ENCODE measurements at regions of chr1 and their contacts with region 1.

Region 1: DNA sequence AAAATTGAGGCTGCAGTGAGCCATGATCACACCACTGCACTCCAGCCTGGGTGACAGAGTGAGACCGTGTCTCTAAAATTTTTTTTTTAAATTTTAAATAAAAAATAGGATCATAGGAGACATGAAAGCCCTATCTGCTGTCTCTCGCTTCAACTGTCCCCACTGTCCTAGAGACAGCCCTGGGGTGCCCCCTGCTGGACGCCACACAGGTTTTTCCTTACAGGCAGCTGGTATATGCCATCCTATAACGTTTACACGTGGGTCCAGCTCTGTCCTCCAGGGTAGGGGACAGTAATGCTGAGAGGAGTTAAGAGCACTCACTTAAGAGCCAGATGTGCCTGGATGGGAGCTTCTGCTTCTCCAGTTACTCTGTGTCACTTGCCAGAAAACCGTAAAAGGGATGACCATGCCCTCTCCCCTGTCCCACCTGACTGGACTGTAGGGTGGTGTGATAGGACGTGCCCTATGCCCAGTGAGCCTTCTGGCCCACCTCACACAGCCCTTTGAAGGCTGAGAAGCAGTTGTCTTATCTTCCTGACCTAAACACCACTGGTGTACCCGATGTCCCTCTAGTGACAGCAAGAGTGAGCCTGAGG is 8.5 kb downstream of the FBXO2 start:
- DNase-seq: peak; percentile 70 to 81
- H3K4me3 ChIP-seq: no peak overlapping the region
- H3K4me3 Mint-ChIP-seq: no peak overlapping the region
- H3K27ac Mint-ChIP-seq: no peak overlapping the region
- H3K4me1 ChIP-seq: no peaks in the 10 kb centered on the region
- H3K4me1 Mint-ChIP-seq: no peaks in the 10 kb centered on the region
- H3K27me3 ChIP-seq: no peaks in the 10 kb centered on the region
- H3K27me3 Mint-ChIP-seq: no peaks in the 10 kb centered on the region
- CTCF ChIP-seq: peak; percentile 69 to 71

Region 2: GRCh38 chr1:10824821-10825423 is 820.8 kb before region 1 on chr1:
- CTCF ChIA-PET with region 1: no interaction called
- POLR2A ChIA-PET with region 1: no interaction called
- intact Hi-C with region 1: no loop called
- DNase-seq: no peak
- H3K4me3 ChIP-seq: no peak overlapping the region
- H3K4me3 Mint-ChIP-seq: no peak overlapping the region
- H3K27ac Mint-ChIP-seq: no peak overlapping the region
- H3K4me1 ChIP-seq: no peaks in the 10 kb centered on the region
- H3K4me1 Mint-ChIP-seq: no peaks in the 10 kb centered on the region
- H3K27me3 ChIP-seq: no peaks in the 10 kb centered on the region
- H3K27me3 Mint-ChIP-seq: no peaks in the 10 kb centered on the region
- CTCF ChIP-seq: no peak

Region 3: DNA sequence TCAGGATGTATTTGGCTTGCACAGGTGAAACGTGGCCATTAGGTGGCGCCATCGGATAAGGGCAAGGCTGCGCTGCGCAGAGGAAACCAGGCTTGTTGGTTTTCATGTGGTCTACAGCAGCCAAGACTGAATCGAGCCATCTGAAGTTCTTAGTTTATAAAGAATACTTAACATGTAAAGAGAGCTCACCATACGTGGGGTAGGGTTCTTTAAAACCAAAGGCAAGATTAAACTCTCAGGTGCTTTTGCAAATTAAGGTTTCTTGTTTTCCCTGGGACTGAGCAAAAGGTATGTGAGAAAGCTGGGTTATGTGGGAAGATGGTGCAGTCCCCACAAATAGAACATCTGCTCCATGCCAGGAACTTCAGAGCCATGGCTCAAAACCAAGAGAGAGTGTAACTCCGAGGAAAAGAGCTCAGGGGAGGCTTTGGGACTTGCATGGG is 608.0 kb before region 1 on chr1:
- CTCF ChIA-PET with region 1: interaction called, 6 read pairs
- POLR2A ChIA-PET with region 1: no interaction called
- intact Hi-C with region 1: loop called (anchors 5 kb)
- DNase-seq: peak; percentile 73 to 84
- H3K4me3 ChIP-seq: no peak overlapping the region
- H3K4me3 Mint-ChIP-seq: no peak overlapping the region
- H3K27ac Mint-ChIP-seq: no peak overlapping the region
- H3K4me1 ChIP-seq: no peaks in the 10 kb centered on the region
- H3K4me1 Mint-ChIP-seq: no peaks in the 10 kb centered on the region
- H3K27me3 ChIP-seq: no peaks in the 10 kb centered on the region
- H3K27me3 Mint-ChIP-seq: no peaks in the 10 kb centered on the region
- CTCF ChIP-seq: peak; percentile 89 to 92

Region 4: DNA sequence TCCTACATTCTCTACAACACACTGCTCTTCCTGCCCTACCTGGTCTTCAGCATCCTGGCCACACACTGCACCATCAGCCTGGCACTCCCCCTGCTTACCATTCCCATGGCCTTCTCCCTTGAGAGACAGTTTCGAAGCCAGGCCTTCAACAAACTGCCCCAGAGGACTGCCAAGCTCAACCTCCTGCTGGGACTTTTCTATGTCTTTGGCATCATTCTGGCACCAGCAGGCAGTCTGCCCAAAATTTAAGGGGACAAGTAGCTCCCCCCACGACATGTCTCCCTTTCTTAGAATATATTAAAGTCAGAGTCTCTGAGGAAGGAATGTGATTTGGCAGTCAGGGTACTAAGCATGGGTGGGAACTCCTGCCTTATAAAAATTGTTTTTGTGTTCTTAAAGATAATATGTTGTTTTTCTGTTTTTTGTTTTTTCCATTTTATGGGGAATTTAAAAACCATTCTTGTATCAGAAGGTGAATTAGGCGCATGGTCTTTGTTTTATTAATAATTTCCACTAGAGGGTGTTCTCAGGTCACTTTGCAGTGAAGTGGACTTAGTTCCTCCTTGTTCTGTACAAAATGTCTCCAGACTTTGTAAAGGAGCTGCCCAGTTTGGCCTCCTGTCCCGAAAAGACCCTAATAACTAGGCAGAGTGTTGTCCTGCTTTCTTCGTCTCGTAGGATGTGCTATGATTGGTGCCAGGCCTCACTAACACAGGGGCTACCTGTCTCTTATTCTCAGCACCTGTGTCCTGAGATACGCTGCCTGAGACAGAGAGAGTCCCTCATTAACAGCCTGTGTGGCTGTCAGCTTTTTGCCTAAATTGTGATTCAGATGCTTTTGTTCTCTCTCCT is 359.7 kb before region 1 on chr1:
- CTCF ChIA-PET with region 1: no interaction called
- POLR2A ChIA-PET with region 1: no interaction called
- intact Hi-C with region 1: loop called (anchors 1 kb)
- DNase-seq: no peak
- H3K4me3 ChIP-seq: no peak overlapping the region
- H3K4me3 Mint-ChIP-seq: no peak overlapping the region
- H3K27ac Mint-ChIP-seq: no peak overlapping the region
- H3K4me1 ChIP-seq: no peaks in the 10 kb centered on the region
- H3K4me1 Mint-ChIP-seq: peaks cover 6% of the 10 kb centered on the region
- H3K27me3 ChIP-seq: no peaks in the 10 kb centered on the region
- H3K27me3 Mint-ChIP-seq: no peaks in the 10 kb centered on the region
- CTCF ChIP-seq: peak in 1 of 2 experiments; percentile 14

Region 5: GRCh38 chr1:11364170-11364569 is 281.6 kb before region 1 on chr1:
- CTCF ChIA-PET with region 1: interaction called, 6 read pairs
- POLR2A ChIA-PET with region 1: no interaction called
- intact Hi-C with region 1: loop called (anchors 1 kb)
- DNase-seq: peak in 1 of 2 experiments; percentile 18
- H3K4me3 ChIP-seq: no peak overlapping the region
- H3K4me3 Mint-ChIP-seq: no peak overlapping the region
- H3K27ac Mint-ChIP-seq: no peak overlapping the region
- H3K4me1 ChIP-seq: peaks cover 12% of the 10 kb centered on the region
- H3K4me1 Mint-ChIP-seq: peaks cover 13% of the 10 kb centered on the region
- H3K27me3 ChIP-seq: no peaks in the 10 kb centered on the region
- H3K27me3 Mint-ChIP-seq: no peaks in the 10 kb centered on the region
- CTCF ChIP-seq: peak; percentile 35 to 41

Region 6: GRCh38 chr1:11478571-11479374 is 167.0 kb before region 1 on chr1 and contains the start of gene DISP3:
- CTCF ChIA-PET with region 1: interaction called, 4 read pairs
- POLR2A ChIA-PET with region 1: no interaction called
- intact Hi-C with region 1: loop called (anchors 5 kb)
- DNase-seq: peak; percentile 78 to 87
- H3K4me3 ChIP-seq: peak within 1 kb of the TSS; percentile 88
- H3K4me3 Mint-ChIP-seq: peak within 1 kb of the TSS; percentile 57
- H3K27ac Mint-ChIP-seq: no peak within 1 kb of the TSS
- H3K4me1 ChIP-seq: no peaks in the 10 kb centered on the region
- H3K4me1 Mint-ChIP-seq: no peaks in the 10 kb centered on the region
- H3K27me3 ChIP-seq: no peaks in the 10 kb centered on the region; the same call in 1 of the 2 replicates
- H3K27me3 Mint-ChIP-seq: peaks cover 9% of the 10 kb centered on the region
- CTCF ChIP-seq: peak; percentile 67 to 81
- total RNA-seq, gene DISP3: 0.56 and 1.1 TPM in 2 replicates

Region 7: GRCh38 chr1:11571906-11572616 is 73.7 kb before region 1 on chr1:
- CTCF ChIA-PET with region 1: no interaction called
- POLR2A ChIA-PET with region 1: no interaction called
- intact Hi-C with region 1: loop called (anchors 10 kb)
- DNase-seq: peak in 1 of 2 experiments; percentile 13
- H3K4me3 ChIP-seq: no peak overlapping the region
- H3K4me3 Mint-ChIP-seq: no peak overlapping the region
- H3K27ac Mint-ChIP-seq: no peak overlapping the region
- H3K4me1 ChIP-seq: no peaks in the 10 kb centered on the region
- H3K4me1 Mint-ChIP-seq: no peaks in the 10 kb centered on the region
- H3K27me3 ChIP-seq: peaks cover 4% of the 10 kb centered on the region
- H3K27me3 Mint-ChIP-seq: peaks cover 20% of the 10 kb centered on the region
- CTCF ChIP-seq: no peak

Region 8: DNA sequence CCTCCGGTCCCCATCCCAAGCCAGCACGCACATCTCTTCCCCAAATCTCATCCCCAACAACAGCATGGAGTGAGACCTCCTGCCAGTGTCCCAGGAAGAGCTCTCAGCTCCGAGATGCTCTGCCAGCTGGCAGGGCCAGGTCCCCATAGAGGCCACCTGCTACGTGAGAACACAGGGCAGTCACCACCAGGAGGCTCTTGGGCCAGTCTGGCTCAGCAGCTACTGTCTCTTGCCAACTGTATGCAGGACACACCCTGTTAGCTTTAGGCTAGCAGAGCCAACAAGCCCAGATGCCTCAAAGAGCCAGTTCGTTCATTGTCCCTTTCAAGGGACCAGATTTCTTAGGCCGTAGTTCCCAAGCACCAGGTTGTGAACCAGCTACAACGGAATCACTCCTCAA is 28.5 kb before region 1 on chr1:
- CTCF ChIA-PET with region 1: no interaction called
- POLR2A ChIA-PET with region 1: no interaction called
- intact Hi-C with region 1: no loop called
- DNase-seq: no peak
- H3K4me3 ChIP-seq: no peak overlapping the region
- H3K4me3 Mint-ChIP-seq: no peak overlapping the region
- H3K27ac Mint-ChIP-seq: no peak overlapping the region
- H3K4me1 ChIP-seq: no peaks in the 10 kb centered on the region
- H3K4me1 Mint-ChIP-seq: no peaks in the 10 kb centered on the region
- H3K27me3 ChIP-seq: no peaks in the 10 kb centered on the region
- H3K27me3 Mint-ChIP-seq: peaks cover 14% of the 10 kb centered on the region
- CTCF ChIP-seq: no peak

Region 9: DNA sequence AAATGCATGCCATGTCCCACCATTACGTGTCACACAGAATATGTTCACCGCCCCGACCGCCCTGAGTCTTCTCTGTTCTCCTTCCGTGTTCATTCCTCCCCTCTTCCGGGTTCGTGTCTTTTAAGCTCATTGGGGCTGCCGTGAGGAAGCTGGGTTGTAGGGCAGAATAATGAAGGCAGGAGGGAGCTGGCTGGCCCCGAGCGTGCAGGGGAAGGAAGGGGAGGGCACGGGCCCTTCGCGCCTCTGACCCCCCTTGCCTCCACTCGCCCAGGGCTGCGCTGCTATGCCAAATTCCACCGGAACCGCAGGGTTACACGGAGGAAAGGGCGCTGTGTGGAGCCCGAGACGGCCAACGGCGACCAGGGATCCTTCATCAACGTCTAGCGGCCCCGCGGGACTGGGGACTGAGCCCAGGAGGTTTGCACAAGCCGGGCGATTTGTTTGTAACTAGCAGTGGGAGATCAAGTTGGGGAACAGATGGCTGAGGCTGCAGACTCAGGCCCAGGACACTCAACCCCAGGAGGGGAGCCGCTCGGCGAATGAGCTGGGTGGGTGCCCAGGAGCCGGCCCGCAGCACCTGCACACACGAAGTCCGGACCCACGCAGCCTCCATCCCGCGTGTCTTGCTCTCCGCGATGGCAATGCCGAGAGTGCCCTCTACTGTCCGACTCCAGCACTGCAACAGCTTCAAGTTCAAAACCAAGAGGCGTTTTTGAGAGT is 73.7 kb after region 1 on chr1:
- CTCF ChIA-PET with region 1: interaction called, 4 read pairs
- POLR2A ChIA-PET with region 1: no interaction called
- intact Hi-C with region 1: loop called (anchors 5 kb)
- DNase-seq: peak; percentile 39 to 62
- H3K4me3 ChIP-seq: peak overlapping the region; percentile 34
- H3K4me3 Mint-ChIP-seq: peak overlapping the region; percentile 72
- H3K27ac Mint-ChIP-seq: no peak overlapping the region
- H3K4me1 ChIP-seq: no peaks in the 10 kb centered on the region
- H3K4me1 Mint-ChIP-seq: no peaks in the 10 kb centered on the region
- H3K27me3 ChIP-seq: no peaks in the 10 kb centered on the region
- H3K27me3 Mint-ChIP-seq: no peaks in the 10 kb centered on the region
- CTCF ChIP-seq: peak; percentile 92 to 94

Region 10: DNA sequence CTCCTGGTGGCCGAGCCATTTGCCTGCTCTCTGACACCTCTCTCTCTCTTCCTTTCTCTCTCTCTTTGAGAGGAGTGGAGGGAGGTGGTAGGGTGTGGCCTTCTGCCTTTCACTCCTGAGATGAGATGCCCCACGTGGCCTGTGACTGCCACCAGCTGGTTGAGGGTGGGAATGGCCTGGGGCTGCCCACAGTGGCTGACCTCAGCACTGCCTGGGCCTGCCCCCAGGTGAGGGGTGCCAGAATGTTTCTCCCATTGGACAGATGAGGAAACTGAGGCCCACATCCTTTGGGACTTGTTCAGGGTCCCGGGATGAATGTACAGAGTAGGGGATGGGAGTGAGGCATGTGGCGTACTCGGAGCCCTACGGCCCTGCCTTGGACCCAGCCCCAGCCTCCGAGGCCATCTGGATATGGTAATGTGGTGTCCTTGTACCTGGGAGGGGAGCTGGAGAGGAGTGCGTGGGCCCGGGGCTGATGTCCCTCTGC is 103.5 kb after region 1 on chr1:
- CTCF ChIA-PET with region 1: no interaction called
- POLR2A ChIA-PET with region 1: no interaction called
- intact Hi-C with region 1: no loop called
- DNase-seq: peak; percentile 62 to 74
- H3K4me3 ChIP-seq: no peak overlapping the region
- H3K4me3 Mint-ChIP-seq: no peak overlapping the region
- H3K27ac Mint-ChIP-seq: peak overlapping the region; percentile 42
- H3K4me1 ChIP-seq: no peaks in the 10 kb centered on the region
- H3K4me1 Mint-ChIP-seq: peaks cover 7% of the 10 kb centered on the region
- H3K27me3 ChIP-seq: no peaks in the 10 kb centered on the region
- H3K27me3 Mint-ChIP-seq: no peaks in the 10 kb centered on the region
- CTCF ChIP-seq: peak; percentile 49 to 76

Region 11: GRCh38 chr1:11781298-11781697 is 135.5 kb after region 1 on chr1:
- CTCF ChIA-PET with region 1: no interaction called
- POLR2A ChIA-PET with region 1: no interaction called
- intact Hi-C with region 1: no loop called
- DNase-seq: no peak
- H3K4me3 ChIP-seq: no peak overlapping the region
- H3K4me3 Mint-ChIP-seq: no peak overlapping the region
- H3K27ac Mint-ChIP-seq: no peak overlapping the region
- H3K4me1 ChIP-seq: peaks cover 7% of the 10 kb centered on the region
- H3K4me1 Mint-ChIP-seq: no peaks in the 10 kb centered on the region
- H3K27me3 ChIP-seq: no peaks in the 10 kb centered on the region
- H3K27me3 Mint-ChIP-seq: no peaks in the 10 kb centered on the region
- CTCF ChIP-seq: no peak

Measured in Caco-2 (cell line).